ENCODE measurements at regions of chr6 and their contacts with region 1.

Region 1: DNA sequence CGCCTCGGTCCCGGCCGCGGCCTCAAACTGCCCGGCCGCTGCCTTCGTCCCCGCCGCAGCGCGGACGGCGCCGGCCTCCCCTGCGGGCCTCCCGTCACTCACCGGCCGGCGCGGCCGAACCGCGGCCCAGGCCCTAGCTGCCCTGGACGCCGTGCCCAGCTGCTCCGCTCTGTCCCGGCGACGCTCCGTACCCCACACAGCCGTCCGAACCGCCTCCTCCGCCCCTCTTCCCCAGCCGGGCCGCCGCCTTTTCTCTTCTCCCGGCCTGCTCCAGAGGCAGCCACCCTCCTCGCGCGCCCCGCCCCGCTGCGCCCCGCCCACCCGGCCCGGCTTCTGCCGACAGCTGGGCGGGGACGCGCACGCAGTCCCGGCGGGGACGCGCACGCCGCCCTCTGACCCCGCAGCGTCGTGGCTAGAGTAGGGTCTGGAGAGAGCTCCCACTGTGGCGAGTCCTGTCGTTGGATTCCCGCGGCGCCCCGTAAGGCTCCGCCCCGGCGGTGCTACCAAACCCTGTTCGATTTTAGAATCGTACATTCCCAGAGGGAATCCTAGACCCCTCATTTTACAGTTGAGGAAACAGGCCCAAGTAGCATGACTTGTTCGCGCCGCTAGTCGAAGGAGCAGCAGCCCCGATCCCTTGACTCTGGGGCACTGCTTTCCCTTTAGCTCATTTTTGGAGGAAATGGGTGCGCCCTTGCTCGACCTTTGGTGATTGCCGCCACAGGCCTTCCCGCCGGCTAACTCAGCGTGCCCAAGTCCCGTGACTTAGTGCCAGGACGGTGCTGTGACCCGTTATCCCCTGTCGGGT is at the start of gene FBXO30:
- DNase-seq: peak; percentile 82
- H3K4me3 Mint-ChIP-seq: peak within 1 kb of the TSS; percentile 87
- H3K27ac Mint-ChIP-seq: peak within 1 kb of the TSS; percentile 89
- H3K4me1 Mint-ChIP-seq: peaks cover 39% of the 10 kb centered on the region
- H3K27me3 Mint-ChIP-seq: no peaks in the 10 kb centered on the region
- total RNA-seq, gene FBXO30: 6.4 and 6.8 TPM in 2 replicates

Region 2: GRCh38 chr6:145547596-145548335 is 266.9 kb before region 1 on chr6:
- intact Hi-C with region 1: no loop called
- DNase-seq: no peak
- H3K4me3 Mint-ChIP-seq: no peak overlapping the region
- H3K27ac Mint-ChIP-seq: no peak overlapping the region
- H3K4me1 Mint-ChIP-seq: no peaks in the 10 kb centered on the region
- H3K27me3 Mint-ChIP-seq: no peaks in the 10 kb centered on the region

Region 3: DNA sequence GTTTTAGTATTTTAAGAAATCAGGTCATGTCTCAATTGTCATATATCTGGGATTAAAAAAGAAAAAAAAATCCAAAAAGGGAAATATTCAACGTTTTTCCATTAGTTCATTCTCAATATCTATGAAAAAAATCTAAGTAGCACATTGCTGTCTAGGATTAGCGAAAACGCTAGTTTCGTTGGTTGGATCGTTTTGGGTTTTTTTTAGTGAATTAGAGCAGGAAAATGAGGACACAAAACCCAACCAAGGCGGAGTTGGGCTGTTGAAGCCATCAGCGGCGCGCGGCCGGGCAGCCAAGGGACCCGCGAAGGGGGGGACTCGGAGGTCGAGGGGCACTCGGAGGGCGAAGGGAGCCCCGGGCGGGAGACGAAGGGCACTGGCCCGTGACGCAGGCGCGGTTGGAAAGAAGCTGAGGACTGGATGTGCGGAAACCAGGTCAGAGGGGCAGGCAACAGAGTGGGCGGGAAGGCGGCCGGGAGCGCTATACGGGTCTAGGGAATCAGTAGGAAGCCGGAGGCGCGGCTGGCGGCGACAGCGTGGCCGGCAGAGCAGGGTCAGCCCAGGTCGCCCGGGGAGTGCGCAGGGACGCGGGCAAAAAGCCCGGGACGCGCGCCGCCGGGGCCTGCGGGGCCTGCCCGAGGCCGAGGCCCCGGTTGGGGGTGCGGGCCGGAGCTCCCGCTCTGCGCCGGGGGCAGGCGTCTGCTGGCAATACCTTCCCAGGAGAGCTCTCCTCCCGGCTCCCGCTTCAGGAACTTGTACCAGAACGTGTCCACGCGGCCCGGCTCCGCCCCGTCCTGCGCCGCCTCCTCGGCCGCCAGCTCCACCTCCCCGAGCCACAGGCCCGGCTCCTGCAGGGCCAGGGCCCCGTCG is 80.0 kb before region 1 on chr6:
- intact Hi-C with region 1: loop called (anchors 1 kb)
- DNase-seq: peak; percentile 67
- H3K4me3 Mint-ChIP-seq: peak overlapping the region; percentile 93
- H3K27ac Mint-ChIP-seq: peak overlapping the region; percentile 98
- H3K4me1 Mint-ChIP-seq: peaks cover 26% of the 10 kb centered on the region
- H3K27me3 Mint-ChIP-seq: no peaks in the 10 kb centered on the region

Region 4: DNA sequence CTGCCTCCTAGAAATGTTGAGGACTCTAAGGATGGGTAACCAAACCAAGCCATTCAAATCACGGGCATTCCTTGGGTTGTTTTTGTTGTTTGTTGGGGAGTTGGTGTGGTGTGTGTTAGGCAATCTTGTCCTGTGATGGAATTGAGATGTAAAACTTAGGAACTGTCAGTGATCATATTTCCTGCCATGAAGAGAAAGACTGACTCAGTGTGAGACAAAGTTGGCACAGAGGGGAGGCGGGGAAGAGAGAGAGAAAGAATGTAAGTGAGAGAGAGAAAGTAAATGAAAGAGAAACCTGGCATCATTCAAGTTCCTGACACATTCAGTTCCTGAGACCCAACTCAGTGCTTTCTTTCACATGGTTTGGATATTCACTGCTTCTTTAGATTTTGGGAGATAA is 21.5 kb after region 1 on chr6:
- intact Hi-C with region 1: loop called (anchors 1 kb)
- DNase-seq: no peak
- H3K4me3 Mint-ChIP-seq: no peak overlapping the region
- H3K27ac Mint-ChIP-seq: peak overlapping the region; percentile 44
- H3K4me1 Mint-ChIP-seq: peaks cover 7% of the 10 kb centered on the region
- H3K27me3 Mint-ChIP-seq: no peaks in the 10 kb centered on the region

Region 5: GRCh38 chr6:145904868-145905267 is 90.2 kb after region 1 on chr6:
- intact Hi-C with region 1: no loop called
- DNase-seq: no peak
- H3K4me3 Mint-ChIP-seq: no peak overlapping the region
- H3K27ac Mint-ChIP-seq: no peak overlapping the region
- H3K4me1 Mint-ChIP-seq: peaks cover 6% of the 10 kb centered on the region
- H3K27me3 Mint-ChIP-seq: no peaks in the 10 kb centered on the region

Region 6: GRCh38 chr6:146357578-146358430 is 543.1 kb after region 1 on chr6:
- intact Hi-C with region 1: no loop called
- DNase-seq: no peak
- H3K4me3 Mint-ChIP-seq: no peak overlapping the region
- H3K27ac Mint-ChIP-seq: peak overlapping the region; percentile 56
- H3K4me1 Mint-ChIP-seq: peaks cover 18% of the 10 kb centered on the region
- H3K27me3 Mint-ChIP-seq: no peaks in the 10 kb centered on the region

Region 7: GRCh38 chr6:146785001-146785585 is 970.4 kb after region 1 on chr6:
- intact Hi-C with region 1: loop called (anchors 10 kb)
- DNase-seq: peak; percentile 20
- H3K4me3 Mint-ChIP-seq: no peak overlapping the region
- H3K27ac Mint-ChIP-seq: no peak overlapping the region
- H3K4me1 Mint-ChIP-seq: peaks cover 13% of the 10 kb centered on the region
- H3K27me3 Mint-ChIP-seq: no peaks in the 10 kb centered on the region

Measured in activated T-helper 2 cell treated with anti-CD3 and anti-CD28 coated beads, Interferon-gamma antibody, Interleukin-2, Interleukin-4, amounts not matched to agents 10 μg/mL and 5 μg/mL and 100 μg/mL, durations not matched to agents 14 hours and 24 hours and 36 hours (primary cell).